GM12878 (cell line): ENCODE measurements at regions of chr3 and their contacts with region 1.

Region 1: GRCh38 chr3:79019137-79019923 is 748.5 kb downstream of the ROBO1 start:
- DNase-seq: no peak
- ATAC-seq: peak; percentile 88
- H3K4me3 ChIP-seq: peak overlapping the region; percentile 27; the same call in 1 of the 2 replicates
- H3K27ac ChIP-seq: peak overlapping the region; percentile 69
- H3K4me1 ChIP-seq: no peaks in the 10 kb centered on the region
- H3K27me3 ChIP-seq: no peaks in the 10 kb centered on the region
- CTCF ChIP-seq: no peak
- EP300 ChIP-seq: no peak
- POLR2A ChIP-seq: 0 out of 2 replicates have a peak, but pooled peaks have one; percentile 37
- RAD21 ChIP-seq: no peak

Region 2: DNA sequence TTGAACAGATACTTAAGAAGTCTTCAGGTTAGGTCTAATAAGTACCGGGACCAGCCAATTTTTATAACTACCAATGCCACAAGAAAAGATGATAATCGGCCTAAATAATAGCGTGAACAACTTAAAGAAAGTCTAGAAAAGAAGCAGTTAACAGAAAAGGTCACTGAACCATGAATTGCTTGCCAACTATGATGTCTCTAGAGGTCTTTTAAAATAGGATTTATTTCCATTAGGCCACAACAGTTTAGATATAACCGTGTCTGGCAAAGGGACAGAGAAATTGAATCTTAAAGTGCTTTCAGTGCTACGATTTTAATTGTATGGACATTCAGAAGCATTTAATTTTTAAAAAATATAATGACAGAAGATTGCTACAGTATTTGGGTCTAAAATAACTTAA is 321.9 kb before region 1 on chr3:
- CTCF ChIA-PET with region 1: no interaction called
- POLR2A ChIA-PET with region 1: no interaction called
- RAD21 ChIA-PET with region 1: no interaction called
- SMC1A ChIA-PET with region 1: no interaction called
- in situ Hi-C with region 1: no loop called
- intact Hi-C with region 1: no loop called
- DNase-seq: no peak
- ATAC-seq: no peak
- H3K4me3 ChIP-seq: no peak overlapping the region
- H3K27ac ChIP-seq: no peak overlapping the region
- H3K4me1 ChIP-seq: no peaks in the 10 kb centered on the region
- H3K27me3 ChIP-seq: no peaks in the 10 kb centered on the region
- CTCF ChIP-seq: no peak
- EP300 ChIP-seq: no peak
- POLR2A ChIP-seq: no peak
- RAD21 ChIP-seq: no peak

Region 3: GRCh38 chr3:78728406-78729145 is 290.8 kb before region 1 on chr3:
- CTCF ChIA-PET with region 1: interaction called, 3 read pairs
- POLR2A ChIA-PET with region 1: interaction called, 3 read pairs
- RAD21 ChIA-PET with region 1: interaction called, 14 read pairs
- SMC1A ChIA-PET with region 1: no interaction called
- in situ Hi-C with region 1: no loop called
- intact Hi-C with region 1: no loop called
- DNase-seq: no peak
- ATAC-seq: no peak
- H3K4me3 ChIP-seq: no peak overlapping the region
- H3K27ac ChIP-seq: no peak overlapping the region
- H3K4me1 ChIP-seq: no peaks in the 10 kb centered on the region
- H3K27me3 ChIP-seq: no peaks in the 10 kb centered on the region
- CTCF ChIP-seq: no peak
- EP300 ChIP-seq: no peak
- POLR2A ChIP-seq: no peak
- RAD21 ChIP-seq: no peak

Region 4: GRCh38 chr3:78872195-78872594 is 147.1 kb before region 1 on chr3:
- CTCF ChIA-PET with region 1: no interaction called
- POLR2A ChIA-PET with region 1: no interaction called
- RAD21 ChIA-PET with region 1: interaction called, 15 read pairs
- SMC1A ChIA-PET with region 1: interaction called, 3 read pairs
- in situ Hi-C with region 1: no loop called
- intact Hi-C with region 1: loop called (anchors 5 kb)
- DNase-seq: no peak
- ATAC-seq: peak; percentile 20; the same call in 2 of the 3 replicates
- H3K4me3 ChIP-seq: no peak overlapping the region
- H3K27ac ChIP-seq: 0 out of 2 replicates have a peak overlapping the region, but pooled peaks have one; percentile 4
- H3K4me1 ChIP-seq: no peaks in the 10 kb centered on the region
- H3K27me3 ChIP-seq: no peaks in the 10 kb centered on the region
- CTCF ChIP-seq: no peak
- EP300 ChIP-seq: no peak; a peak in 1 of 4 replicates
- POLR2A ChIP-seq: no peak
- RAD21 ChIP-seq: no peak

Region 5: GRCh38 chr3:79005084-79005483 is 14.2 kb before region 1 on chr3:
- CTCF ChIA-PET with region 1: interaction called, 19 read pairs
- POLR2A ChIA-PET with region 1: interaction called, 21 read pairs
- RAD21 ChIA-PET with region 1: interaction called, 27 read pairs
- SMC1A ChIA-PET with region 1: interaction called, 32 read pairs
- in situ Hi-C with region 1: no loop called
- intact Hi-C with region 1: no loop called
- DNase-seq: no peak
- ATAC-seq: no peak
- H3K4me3 ChIP-seq: no peak overlapping the region
- H3K27ac ChIP-seq: no peak overlapping the region
- H3K4me1 ChIP-seq: no peaks in the 10 kb centered on the region
- H3K27me3 ChIP-seq: no peaks in the 10 kb centered on the region
- CTCF ChIP-seq: no peak
- EP300 ChIP-seq: no peak
- POLR2A ChIP-seq: no peak
- RAD21 ChIP-seq: no peak

Region 6: GRCh38 chr3:79436387-79436786 is 417.1 kb after region 1 on chr3:
- CTCF ChIA-PET with region 1: no interaction called
- POLR2A ChIA-PET with region 1: no interaction called
- RAD21 ChIA-PET with region 1: no interaction called
- SMC1A ChIA-PET with region 1: no interaction called
- in situ Hi-C with region 1: no loop called
- intact Hi-C with region 1: no loop called
- DNase-seq: no peak
- ATAC-seq: no peak
- H3K4me3 ChIP-seq: no peak overlapping the region
- H3K27ac ChIP-seq: no peak overlapping the region
- H3K4me1 ChIP-seq: no peaks in the 10 kb centered on the region
- H3K27me3 ChIP-seq: no peaks in the 10 kb centered on the region
- CTCF ChIP-seq: no peak
- EP300 ChIP-seq: no peak
- POLR2A ChIP-seq: no peak
- RAD21 ChIP-seq: no peak

Region 7: GRCh38 chr3:80017369-80017768 is 998.0 kb after region 1 on chr3:
- CTCF ChIA-PET with region 1: no interaction called
- POLR2A ChIA-PET with region 1: no interaction called
- RAD21 ChIA-PET with region 1: no interaction called
- SMC1A ChIA-PET with region 1: no interaction called
- in situ Hi-C with region 1: no loop called
- intact Hi-C with region 1: no loop called
- DNase-seq: no peak
- ATAC-seq: no peak
- H3K4me3 ChIP-seq: no peak overlapping the region
- H3K27ac ChIP-seq: no peak overlapping the region
- H3K4me1 ChIP-seq: no peaks in the 10 kb centered on the region
- H3K27me3 ChIP-seq: no peaks in the 10 kb centered on the region
- CTCF ChIP-seq: no peak
- EP300 ChIP-seq: no peak
- POLR2A ChIP-seq: no peak
- RAD21 ChIP-seq: no peak